ENCODE measurements at regions of chr4 and their contacts with region 1.

Region 1: DNA sequence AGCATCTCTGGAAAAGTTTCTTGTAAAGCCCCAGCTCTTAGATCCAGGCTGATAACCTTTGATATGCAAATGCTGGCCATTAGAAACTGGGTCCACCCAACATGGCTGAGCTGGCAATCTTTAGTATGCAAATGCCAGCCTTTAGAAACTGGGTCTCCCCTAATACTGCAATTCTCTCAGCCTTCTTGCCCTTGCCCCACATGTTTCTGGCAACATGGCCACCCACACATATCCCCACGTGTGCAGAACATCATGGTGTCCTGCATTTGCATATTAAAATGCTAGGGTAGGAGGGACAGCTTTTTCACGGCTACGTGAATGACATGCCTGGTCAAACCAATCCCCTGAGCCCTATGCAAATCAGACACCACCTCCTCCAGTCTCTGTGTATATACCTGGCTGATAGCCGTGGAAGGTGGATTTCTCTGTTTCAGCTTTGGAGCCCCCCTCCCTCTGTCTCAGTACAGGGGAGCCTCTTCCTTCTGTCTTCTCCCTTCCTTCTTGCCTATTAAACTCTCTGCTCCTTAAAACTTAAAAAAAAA is 344.0 kb upstream of the NWD2 start:
- DNase-seq: no peak
- H3K4me3 ChIP-seq: no peak overlapping the region
- H3K27ac ChIP-seq: no peak overlapping the region
- H3K4me1 ChIP-seq: peaks cover 0 to 7% (median 3%) of the 10 kb centered on the region in 4 donors
- H3K27me3 ChIP-seq: no peaks in the 10 kb centered on the region
- CTCF ChIP-seq: no peak
- EP300 ChIP-seq: no peak
- POLR2A ChIP-seq: no peak

Region 2: GRCh38 chr4:36921474-36922254 is 21.1 kb after region 1 on chr4:
- in situ Hi-C with region 1: no loop called
- intact Hi-C with region 1: loop called (anchors 2 kb)
- DNase-seq: no peak
- H3K4me3 ChIP-seq: no peak overlapping the region
- H3K27ac ChIP-seq: no peak overlapping the region
- H3K4me1 ChIP-seq: no peaks in the 10 kb centered on the region
- H3K27me3 ChIP-seq: no peaks in the 10 kb centered on the region
- CTCF ChIP-seq: no peak
- EP300 ChIP-seq: no peak
- POLR2A ChIP-seq: no peak

Region 3: DNA sequence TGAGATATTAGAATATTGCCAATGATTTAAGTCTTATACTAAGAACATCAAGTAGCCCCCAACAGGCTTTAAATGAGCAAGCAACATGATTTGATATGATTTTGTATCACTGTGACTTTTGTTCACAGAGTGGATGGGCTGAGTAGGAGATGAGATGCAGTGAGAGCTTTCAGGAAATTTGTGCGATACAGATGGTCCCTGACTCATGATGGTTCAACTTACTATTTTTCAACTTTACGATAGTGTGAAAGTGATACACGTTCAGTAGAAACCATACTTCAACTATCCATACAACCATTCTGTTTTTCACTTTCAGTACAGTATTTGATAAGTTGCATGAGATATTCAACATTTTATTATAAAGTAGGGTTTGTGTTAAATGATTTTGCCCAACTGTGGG is 265.3 kb after region 1 on chr4:
- in situ Hi-C with region 1: no loop called
- intact Hi-C with region 1: no loop called
- DNase-seq: no peak
- H3K4me3 ChIP-seq: no peak overlapping the region
- H3K27ac ChIP-seq: no peak overlapping the region
- H3K4me1 ChIP-seq: no peaks in the 10 kb centered on the region
- H3K27me3 ChIP-seq: no peaks in the 10 kb centered on the region
- CTCF ChIP-seq: no peak
- EP300 ChIP-seq: no peak
- POLR2A ChIP-seq: no peak